Natural killer cell (primary cell): ENCODE measurements at regions of chr16 and their contacts with region 1.

Region 1: GRCh38 chr16:29700253-29700987 is 21.4 kb downstream of the QPRT start:
- DNase-seq: peak; percentile 75 to 92
- ATAC-seq: peak; percentile 56 to 76 (median 62)
- H3K4me3 ChIP-seq: no peak overlapping the region
- H3K4me3 Mint-ChIP-seq: peak overlapping the region; percentile 92
- H3K27ac ChIP-seq: peak overlapping the region; percentile 30
- H3K27ac Mint-ChIP-seq: peak overlapping the region; percentile 94 to 99
- H3K4me1 ChIP-seq: peaks cover 32% of the 10 kb centered on the region
- H3K4me1 Mint-ChIP-seq: peaks cover 26 to 35% of the 10 kb centered on the region in 2 donors
- H3K27me3 ChIP-seq: no peaks in the 10 kb centered on the region
- H3K27me3 Mint-ChIP-seq: peaks cover 0 to 3% of the 10 kb centered on the region in 2 donors
- CTCF ChIP-seq: peak; percentile 90

Region 2: DNA sequence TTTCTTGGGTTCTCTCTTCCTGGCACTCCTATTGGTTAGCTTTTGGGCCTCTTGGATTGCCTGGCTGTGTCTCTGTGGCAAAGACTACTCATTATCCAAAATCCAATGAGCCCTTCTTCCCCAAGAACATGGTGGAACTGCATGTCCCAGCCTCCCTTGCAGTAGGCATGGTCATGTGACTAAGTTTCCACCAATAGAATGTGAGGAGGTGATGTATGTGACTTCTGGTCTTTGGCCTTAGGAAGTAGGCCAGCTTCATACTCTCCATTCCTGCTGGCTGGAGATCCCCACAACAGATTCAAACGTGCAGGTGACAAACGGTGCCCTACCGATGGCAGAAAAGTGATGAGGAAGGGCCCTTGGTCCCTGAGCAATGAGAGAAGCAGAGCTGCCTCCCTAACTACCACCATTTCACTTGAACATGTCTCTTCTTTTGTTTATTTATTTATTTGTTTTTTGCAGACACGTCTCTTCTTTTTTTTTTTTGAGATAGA is 54.7 kb before region 1 on chr16:
- intact Hi-C with region 1: loop called (anchors 10 kb)
- DNase-seq: peak in 1 of 2 donors; percentile 32
- ATAC-seq: no peak
- H3K4me3 ChIP-seq: no peak overlapping the region
- H3K4me3 Mint-ChIP-seq: no peak overlapping the region
- H3K27ac ChIP-seq: peak overlapping the region; percentile 59
- H3K27ac Mint-ChIP-seq: peak overlapping the region; percentile 65 to 73
- H3K4me1 ChIP-seq: peaks cover 35% of the 10 kb centered on the region
- H3K4me1 Mint-ChIP-seq: peaks cover 31 to 36% of the 10 kb centered on the region in 2 donors
- H3K27me3 ChIP-seq: no peaks in the 10 kb centered on the region
- H3K27me3 Mint-ChIP-seq: no peaks in the 10 kb centered on the region
- CTCF ChIP-seq: no peak

Region 3: GRCh38 chr16:29738514-29738913 is 38.1 kb after region 1 on chr16:
- intact Hi-C with region 1: loop called (anchors 2 kb)
- DNase-seq: peak; percentile 31 to 90
- ATAC-seq: peak; percentile 89 to 96 (median 92)
- H3K4me3 ChIP-seq: no peak overlapping the region
- H3K4me3 Mint-ChIP-seq: peak overlapping the region; percentile 57
- H3K27ac ChIP-seq: peak overlapping the region; percentile 84
- H3K27ac Mint-ChIP-seq: peak overlapping the region; percentile 99
- H3K4me1 ChIP-seq: peaks cover 72% of the 10 kb centered on the region
- H3K4me1 Mint-ChIP-seq: peaks cover 73 to 85% of the 10 kb centered on the region in 2 donors
- H3K27me3 ChIP-seq: no peaks in the 10 kb centered on the region
- H3K27me3 Mint-ChIP-seq: no peaks in the 10 kb centered on the region
- CTCF ChIP-seq: no peak

Region 4: GRCh38 chr16:29815793-29816693 is 115.6 kb after region 1 on chr16 and contains the start of gene PAGR1:
- intact Hi-C with region 1: loop called (anchors 1 kb)
- DNase-seq: peak; percentile 96 to 100
- ATAC-seq: peak; percentile 76 to 91 (median 78)
- H3K4me3 ChIP-seq: peak within 1 kb of the TSS; percentile 79
- H3K4me3 Mint-ChIP-seq: peak within 1 kb of the TSS; percentile 99
- H3K27ac ChIP-seq: peak within 1 kb of the TSS; percentile 88
- H3K27ac Mint-ChIP-seq: peak within 1 kb of the TSS; percentile 94 to 98
- H3K4me1 ChIP-seq: peaks cover 63% of the 10 kb centered on the region
- H3K4me1 Mint-ChIP-seq: peaks cover 59 to 81% of the 10 kb centered on the region in 2 donors
- H3K27me3 ChIP-seq: no peaks in the 10 kb centered on the region
- H3K27me3 Mint-ChIP-seq: peaks cover 0 to 2% of the 10 kb centered on the region in 2 donors
- CTCF ChIP-seq: peak; percentile 97
- total RNA-seq, gene PAGR1: 8.9 to 16.2 (median 13.4) TPM

Region 5: GRCh38 chr16:29862884-29863668 is 162.7 kb after region 1 on chr16 and contains the start of gene CDIPT:
- intact Hi-C with region 1: loop called (anchors 5 kb)
- DNase-seq: peak; percentile 88 to 98
- ATAC-seq: peak; percentile 97 to 99 (median 97)
- H3K4me3 ChIP-seq: peak within 1 kb of the TSS; percentile 72
- H3K4me3 Mint-ChIP-seq: peak within 1 kb of the TSS; percentile 91
- H3K27ac ChIP-seq: peak within 1 kb of the TSS; percentile 88
- H3K27ac Mint-ChIP-seq: peak within 1 kb of the TSS; percentile 95 to 99
- H3K4me1 ChIP-seq: peaks cover 26% of the 10 kb centered on the region
- H3K4me1 Mint-ChIP-seq: peaks cover 18 to 29% of the 10 kb centered on the region in 2 donors
- H3K27me3 ChIP-seq: no peaks in the 10 kb centered on the region
- H3K27me3 Mint-ChIP-seq: peaks cover 0 to 4% of the 10 kb centered on the region in 2 donors
- CTCF ChIP-seq: peak; percentile 51
- total RNA-seq, gene CDIPT: 42.3 to 66.9 (median 53.0) TPM

Region 6: GRCh38 chr16:30018731-30019158 is 318.3 kb after region 1 on chr16:
- intact Hi-C with region 1: loop called (anchors 1 kb)
- DNase-seq: no peak
- ATAC-seq: no peak
- H3K4me3 ChIP-seq: no peak overlapping the region
- H3K4me3 Mint-ChIP-seq: no peak overlapping the region
- H3K27ac ChIP-seq: no peak overlapping the region
- H3K27ac Mint-ChIP-seq: no peak overlapping the region
- H3K4me1 ChIP-seq: peaks cover 12% of the 10 kb centered on the region
- H3K4me1 Mint-ChIP-seq: peaks cover 8 to 13% of the 10 kb centered on the region in 2 donors
- H3K27me3 ChIP-seq: no peaks in the 10 kb centered on the region
- H3K27me3 Mint-ChIP-seq: peaks cover 0 to 14% of the 10 kb centered on the region in 2 donors
- CTCF ChIP-seq: no peak